ENCODE measurements at regions of chr16 and their contacts with region 1.

Region 1: DNA sequence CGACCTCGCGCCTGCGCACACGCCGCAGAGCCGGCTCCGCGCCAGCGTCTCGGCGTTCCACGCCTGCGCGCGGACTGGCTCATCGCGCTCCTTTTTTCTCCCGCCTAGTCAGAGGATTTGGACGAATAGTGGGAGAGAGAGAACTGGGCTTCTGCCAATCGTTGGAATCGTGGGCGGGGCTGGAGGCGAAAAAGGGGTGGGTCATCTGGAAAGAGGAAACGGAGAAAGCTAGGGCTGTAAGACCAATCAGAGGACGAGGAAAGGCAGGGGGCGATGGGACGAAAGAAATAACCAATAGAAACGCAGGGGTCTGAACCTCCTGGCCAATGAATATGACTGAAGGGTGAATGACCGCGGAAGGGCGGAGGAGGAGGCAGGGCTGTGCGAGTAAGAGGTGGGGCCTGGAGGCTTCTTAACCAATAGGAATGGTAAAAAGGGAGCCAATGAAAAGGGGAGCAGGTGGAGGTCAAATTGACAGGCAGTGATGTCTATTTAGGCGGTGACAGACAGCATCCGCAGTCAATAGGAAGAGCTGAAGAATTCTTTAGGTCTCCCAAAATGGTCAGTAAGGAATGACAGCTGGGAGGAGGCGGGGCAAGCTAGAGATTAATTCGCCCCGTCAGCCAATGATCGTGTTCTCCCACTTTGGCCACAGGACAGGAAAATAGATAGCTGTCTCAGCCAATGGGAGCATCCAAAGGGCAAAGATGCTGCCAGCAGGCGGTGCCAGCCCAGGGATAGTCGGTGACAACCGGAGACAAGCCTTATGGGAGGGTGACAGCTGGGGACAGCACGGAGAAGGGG is at the start of gene TBC1D10B:
- DNase-seq: peak; percentile 99 to 100
- ATAC-seq: peak; percentile 83 to 87
- H3K4me3 ChIP-seq: peak within 1 kb of the TSS; percentile 65 to 78 (median 74)
- H3K27ac ChIP-seq: peak within 1 kb of the TSS; percentile 90 to 99 (median 96)
- H3K4me1 ChIP-seq: peaks cover 41 to 64% of the 10 kb centered on the region in 2 donors
- H3K27me3 ChIP-seq: no peaks in the 10 kb centered on the region
- CTCF ChIP-seq: peak in 1 of 5 experiments; percentile 14
- POLR2A ChIP-seq: no peak
- total RNA-seq, gene TBC1D10B: 35.3 to 52.6 (median 43.6) TPM

Region 2: DNA sequence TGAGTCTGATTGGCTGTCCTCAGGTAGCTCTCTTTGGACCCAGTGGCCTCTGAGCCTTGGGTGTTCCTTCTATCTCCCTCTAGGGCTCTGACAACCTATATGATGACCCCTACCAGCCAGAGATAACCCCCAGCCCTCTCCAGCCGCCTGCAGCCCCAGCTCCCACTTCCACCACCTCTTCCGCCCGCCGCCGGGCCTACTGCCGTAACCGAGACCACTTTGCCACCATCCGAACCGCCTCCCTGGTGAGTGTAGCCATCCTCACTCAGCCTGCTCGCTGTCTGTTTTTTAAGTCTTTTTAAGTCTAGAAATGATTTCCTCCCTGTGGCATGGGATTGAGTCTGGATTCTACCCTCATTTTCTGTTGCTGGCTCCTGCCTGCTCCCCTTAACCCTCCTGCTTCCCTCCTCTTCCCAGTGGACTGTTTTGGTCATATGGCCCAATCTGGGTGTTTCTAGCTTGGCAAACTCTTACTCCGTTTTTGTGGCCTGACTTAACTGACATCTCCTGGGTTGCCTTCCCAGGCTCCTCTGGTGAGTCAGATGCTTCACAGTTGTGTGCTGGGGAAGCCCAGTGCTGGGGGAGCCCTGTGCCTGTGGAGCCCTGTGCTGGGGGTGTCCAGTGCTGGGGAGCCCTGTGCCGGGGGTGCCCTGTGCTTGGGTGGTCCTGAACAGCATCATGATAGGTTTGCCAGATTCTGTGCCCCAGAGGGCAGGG is 387.1 kb before region 1 on chr16:
- in situ Hi-C with region 1: no loop called
- intact Hi-C with region 1: no loop called
- DNase-seq: no peak
- ATAC-seq: no peak
- H3K4me3 ChIP-seq: no peak overlapping the region
- H3K27ac ChIP-seq: no peak overlapping the region
- H3K4me1 ChIP-seq: peaks cover 0 to 3% of the 10 kb centered on the region in 2 donors
- H3K27me3 ChIP-seq: no peaks in the 10 kb centered on the region
- CTCF ChIP-seq: no peak
- POLR2A ChIP-seq: no peak

Region 3: GRCh38 chr16:30091474-30092372 is 278.9 kb before region 1 on chr16 and contains the start of gene TBX6:
- in situ Hi-C with region 1: loop called in 1 of 4 experiments (anchors 25 kb)
- intact Hi-C with region 1: loop called (anchors 10 kb)
- DNase-seq: peak; percentile 88 to 90
- ATAC-seq: peak; percentile 76 to 78
- H3K4me3 ChIP-seq: peak within 1 kb of the TSS; percentile 45 to 83 (median 69)
- H3K27ac ChIP-seq: peak within 1 kb of the TSS; percentile 89 to 99 (median 96)
- H3K4me1 ChIP-seq: peaks cover 39 to 44% of the 10 kb centered on the region in 2 donors
- H3K27me3 ChIP-seq: no peaks in the 10 kb centered on the region
- CTCF ChIP-seq: peak; percentile 80 to 89 (median 87)
- POLR2A ChIP-seq: peak; percentile 4 to 20
- total RNA-seq, gene TBX6: 0.29 to 0.92 (median 0.67) TPM

Region 4: GRCh38 chr16:30335598-30336474 is 34.8 kb before region 1 on chr16:
- in situ Hi-C with region 1: no loop called
- intact Hi-C with region 1: loop called (anchors 2 kb)
- DNase-seq: peak; percentile 64 to 75
- ATAC-seq: peak; percentile 52 to 67
- H3K4me3 ChIP-seq: peak overlapping the region; percentile 66 to 85 (median 77)
- H3K27ac ChIP-seq: peak overlapping the region; percentile 89 to 99 (median 96)
- H3K4me1 ChIP-seq: peaks cover 5 to 32% of the 10 kb centered on the region in 2 donors
- H3K27me3 ChIP-seq: no peaks in the 10 kb centered on the region
- CTCF ChIP-seq: no peak
- POLR2A ChIP-seq: no peak

Region 5: GRCh38 chr16:30355144-30355894 is 15.3 kb before region 1 on chr16 and contains the start of gene CD2BP2:
- in situ Hi-C with region 1: no loop called
- intact Hi-C with region 1: loop called (anchors 1 kb)
- DNase-seq: peak; percentile 96 to 97
- ATAC-seq: peak; percentile 91 to 92
- H3K4me3 ChIP-seq: peak within 1 kb of the TSS; percentile 96 to 100 (median 97)
- H3K27ac ChIP-seq: peak within 1 kb of the TSS; percentile 92 to 97 (median 94)
- H3K4me1 ChIP-seq: peaks cover 43 to 48% of the 10 kb centered on the region in 2 donors
- H3K27me3 ChIP-seq: no peaks in the 10 kb centered on the region
- CTCF ChIP-seq: no peak
- POLR2A ChIP-seq: peak; percentile 46
- total RNA-seq, gene CD2BP2: 33.4 to 53.8 (median 40.9) TPM

Region 6: DNA sequence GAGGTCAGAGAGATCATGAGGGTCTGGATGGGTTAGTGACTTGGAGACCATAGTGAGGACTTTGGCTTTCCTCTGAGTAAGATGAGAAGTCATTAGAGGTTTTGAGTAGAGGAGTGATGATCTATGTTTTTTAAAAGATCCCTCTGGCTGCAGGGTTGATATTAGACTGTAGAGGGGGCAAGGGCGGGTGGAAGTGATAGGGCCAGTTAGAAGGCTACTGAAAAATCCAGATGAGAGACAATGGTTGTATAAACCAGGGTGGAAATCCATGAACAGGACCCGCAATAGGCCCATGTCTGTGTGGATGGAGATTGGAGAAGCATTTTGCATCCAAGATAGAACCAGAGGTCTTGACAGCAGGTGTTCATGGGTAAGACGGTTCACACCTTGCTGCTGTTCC is 111.7 kb after region 1 on chr16:
- in situ Hi-C with region 1: no loop called
- intact Hi-C with region 1: no loop called
- DNase-seq: no peak
- ATAC-seq: no peak
- H3K4me3 ChIP-seq: no peak overlapping the region
- H3K27ac ChIP-seq: no peak overlapping the region
- H3K4me1 ChIP-seq: peaks cover 3 to 7% of the 10 kb centered on the region in 2 donors
- H3K27me3 ChIP-seq: no peaks in the 10 kb centered on the region
- CTCF ChIP-seq: no peak
- POLR2A ChIP-seq: no peak

Region 7: GRCh38 chr16:30657866-30658730 is 287.5 kb after region 1 on chr16 and contains the start of gene FBRS:
- in situ Hi-C with region 1: no loop called
- intact Hi-C with region 1: loop called (anchors 1 kb)
- DNase-seq: peak; percentile 100
- ATAC-seq: peak; percentile 83 to 88
- H3K4me3 ChIP-seq: peak within 1 kb of the TSS; percentile 61 to 89 (median 79)
- H3K27ac ChIP-seq: peak within 1 kb of the TSS; percentile 93 to 99 (median 96)
- H3K4me1 ChIP-seq: peaks cover 32 to 33% of the 10 kb centered on the region in 2 donors
- H3K27me3 ChIP-seq: no peaks in the 10 kb centered on the region
- CTCF ChIP-seq: peak; percentile 64 to 90 (median 83)
- POLR2A ChIP-seq: peak; percentile 83 to 88
- total RNA-seq, gene FBRS: 22.0 to 34.8 (median 28.0) TPM